ENCODE measurements at regions of chr7 and their contacts with region 1.

Region 1: GRCh38 chr7:92245487-92246362 is at the starts of genes ANKIB1 and KRIT1:
- DNase-seq: peak; percentile 81
- H3K4me3 Mint-ChIP-seq: peak within 1 kb of the TSS; percentile 94
- H3K27ac Mint-ChIP-seq: peak within 1 kb of the TSS; percentile 99
- H3K4me1 Mint-ChIP-seq: peaks cover 34% of the 10 kb centered on the region
- H3K27me3 Mint-ChIP-seq: no peaks in the 10 kb centered on the region
- total RNA-seq, gene ANKIB1: 60.9 and 61.8 TPM in 2 replicates
- total RNA-seq, gene KRIT1: 48.2 and 48.3 TPM in 2 replicates

Region 2: DNA sequence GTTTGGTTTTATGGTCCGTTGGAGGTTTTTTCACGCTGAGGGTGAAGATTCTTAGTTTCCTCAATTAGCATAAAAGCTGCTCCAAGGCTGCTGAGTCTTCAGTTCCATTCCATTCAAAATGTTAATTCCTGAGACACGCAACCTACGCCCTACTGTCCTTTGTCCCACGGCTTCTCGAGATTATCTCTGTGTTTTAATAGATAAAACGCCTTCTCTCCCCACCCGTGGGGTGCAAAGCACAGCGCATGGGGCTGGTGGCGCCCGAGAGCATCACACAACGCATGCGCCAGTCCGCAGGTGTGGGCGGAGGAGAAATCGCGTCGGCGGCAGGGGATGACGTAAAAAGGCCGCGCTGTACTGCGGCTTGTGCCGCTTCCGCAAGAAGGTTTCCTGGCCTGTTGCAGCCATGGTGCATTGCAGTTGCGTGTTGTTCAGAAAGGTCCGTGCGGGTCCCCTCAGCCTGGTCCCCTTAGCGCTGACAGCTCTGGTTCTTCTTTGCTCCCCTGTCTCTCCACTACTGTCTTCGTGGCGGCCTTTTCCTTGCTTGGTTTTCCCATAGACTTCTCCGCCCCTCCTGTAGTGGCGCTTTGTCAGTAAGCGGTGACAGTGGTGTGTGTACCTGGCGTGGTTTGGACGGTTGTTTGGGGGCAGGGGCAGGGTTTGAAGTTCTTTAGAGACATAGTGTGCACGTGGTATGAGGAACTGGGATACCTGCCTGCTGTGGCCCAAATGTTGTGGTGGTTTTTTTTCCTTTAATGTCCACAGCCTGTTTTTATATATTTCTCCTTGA is 1899.2 kb before region 1 on chr7 and contains the start of gene GTPBP10:
- intact Hi-C with region 1: loop called (anchors 5 kb)
- DNase-seq: peak; percentile 94
- H3K4me3 Mint-ChIP-seq: peak within 1 kb of the TSS; percentile 91
- H3K27ac Mint-ChIP-seq: peak within 1 kb of the TSS; percentile 97
- H3K4me1 Mint-ChIP-seq: peaks cover 38% of the 10 kb centered on the region
- H3K27me3 Mint-ChIP-seq: no peaks in the 10 kb centered on the region
- total RNA-seq, gene GTPBP10: 32.6 and 36.2 TPM in 2 replicates

Region 3: GRCh38 chr7:92042056-92042737 is 203.5 kb before region 1 on chr7:
- intact Hi-C with region 1: no loop called
- DNase-seq: no peak
- H3K4me3 Mint-ChIP-seq: no peak overlapping the region
- H3K27ac Mint-ChIP-seq: no peak overlapping the region
- H3K4me1 Mint-ChIP-seq: no peaks in the 10 kb centered on the region
- H3K27me3 Mint-ChIP-seq: no peaks in the 10 kb centered on the region

Region 4: DNA sequence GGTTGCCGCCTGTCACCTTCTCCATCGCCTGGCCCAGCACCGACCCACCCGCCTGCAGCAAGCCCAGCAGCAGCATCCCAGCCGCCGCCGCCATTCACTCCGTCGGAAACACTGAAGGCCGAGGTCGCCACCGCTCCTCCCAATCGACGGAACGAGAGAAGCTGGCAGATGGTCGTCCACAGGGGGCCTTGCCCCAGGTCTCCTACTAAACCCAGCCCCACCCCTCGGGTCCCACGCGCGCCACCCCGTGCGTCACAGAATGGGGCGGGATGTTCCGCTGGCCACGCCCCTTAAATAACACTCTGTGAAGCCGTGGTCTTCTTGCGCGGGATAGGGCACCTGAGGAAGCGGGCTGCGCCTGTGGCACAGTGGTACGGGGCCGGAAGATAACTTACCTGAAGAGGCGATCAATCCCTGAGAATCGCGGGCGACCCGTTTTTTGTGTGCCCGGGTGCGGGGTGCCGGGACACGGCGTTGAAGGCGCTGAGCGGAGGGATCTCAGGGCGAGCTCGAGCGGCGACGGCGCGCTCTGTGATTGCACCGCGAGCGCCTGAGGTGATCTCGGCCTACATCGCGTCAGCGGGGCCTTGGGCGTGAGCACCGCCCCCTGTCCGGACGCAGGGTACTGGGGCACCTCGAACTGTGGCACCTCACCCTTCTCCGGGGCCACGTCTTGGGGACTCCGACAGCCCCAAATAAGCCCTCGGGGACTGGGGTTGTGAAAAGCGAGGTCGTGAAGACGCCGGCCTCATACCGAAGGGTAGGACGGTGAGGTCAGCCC is 111.3 kb before region 1 on chr7 and contains the start of gene CYP51A1:
- intact Hi-C with region 1: loop called (anchors 1 kb)
- DNase-seq: peak; percentile 92
- H3K4me3 Mint-ChIP-seq: peak within 1 kb of the TSS; percentile 98
- H3K27ac Mint-ChIP-seq: peak within 1 kb of the TSS; percentile 97
- H3K4me1 Mint-ChIP-seq: peaks cover 44% of the 10 kb centered on the region
- H3K27me3 Mint-ChIP-seq: no peaks in the 10 kb centered on the region
- total RNA-seq, gene CYP51A1: 96.9 and 102 TPM in 2 replicates

Region 5: GRCh38 chr7:92313055-92313454 is 67.3 kb after region 1 on chr7:
- intact Hi-C with region 1: loop called (anchors 5 kb)
- DNase-seq: no peak
- H3K4me3 Mint-ChIP-seq: no peak overlapping the region
- H3K27ac Mint-ChIP-seq: no peak overlapping the region
- H3K4me1 Mint-ChIP-seq: no peaks in the 10 kb centered on the region
- H3K27me3 Mint-ChIP-seq: no peaks in the 10 kb centered on the region

Region 6: GRCh38 chr7:92336662-92337340 is 91.1 kb after region 1 on chr7:
- intact Hi-C with region 1: no loop called
- DNase-seq: no peak
- H3K4me3 Mint-ChIP-seq: no peak overlapping the region
- H3K27ac Mint-ChIP-seq: no peak overlapping the region
- H3K4me1 Mint-ChIP-seq: no peaks in the 10 kb centered on the region
- H3K27me3 Mint-ChIP-seq: no peaks in the 10 kb centered on the region

Region 7: DNA sequence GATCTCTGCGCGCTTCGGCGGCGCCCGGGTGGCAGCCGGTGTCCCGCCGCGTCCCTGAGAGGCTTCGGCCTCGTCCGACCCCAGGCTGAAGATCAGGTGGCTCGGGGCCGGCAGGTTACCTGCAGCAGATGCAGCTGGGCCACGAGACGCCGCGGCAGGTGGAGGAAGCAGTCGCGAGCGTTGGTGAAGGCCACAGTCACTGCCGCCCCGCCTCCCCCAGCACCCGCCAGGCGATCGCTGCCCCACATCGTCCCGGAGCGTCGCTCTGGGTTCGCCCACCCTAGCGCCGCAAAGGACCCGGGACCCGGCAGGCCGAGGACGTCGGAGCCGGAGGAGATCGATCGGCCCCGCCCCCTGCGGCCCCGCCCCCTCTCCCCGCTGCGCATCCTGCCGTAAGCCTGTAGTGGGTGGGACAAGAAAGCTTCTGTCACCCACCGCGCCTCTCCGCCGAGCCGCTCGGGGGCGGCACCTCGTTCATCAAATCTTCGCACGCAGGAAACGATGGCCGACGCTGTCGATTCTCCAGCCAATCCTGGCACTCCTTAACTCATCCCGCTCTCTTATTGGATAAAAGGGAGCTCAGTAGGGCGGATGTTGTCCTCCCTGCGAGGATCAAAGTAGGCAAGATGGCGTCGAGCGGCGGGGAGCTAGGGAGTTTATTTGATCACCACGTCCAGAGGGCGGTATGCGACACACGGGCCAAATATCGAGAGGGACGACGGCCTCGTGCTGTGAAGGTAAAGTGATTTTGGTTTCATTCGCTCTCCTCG is 282.6 kb after region 1 on chr7 and contains the starts of genes PEX1 and RBM48:
- intact Hi-C with region 1: loop called (anchors 1 kb)
- DNase-seq: peak; percentile 94
- H3K4me3 Mint-ChIP-seq: peak within 1 kb of the TSS; percentile 91
- H3K27ac Mint-ChIP-seq: peak within 1 kb of the TSS; percentile 94
- H3K4me1 Mint-ChIP-seq: peaks cover 24% of the 10 kb centered on the region
- H3K27me3 Mint-ChIP-seq: no peaks in the 10 kb centered on the region
- total RNA-seq, gene PEX1: 14.7 and 17.0 TPM in 2 replicates
- total RNA-seq, gene RBM48: 17.2 and 17.6 TPM in 2 replicates

Region 8: DNA sequence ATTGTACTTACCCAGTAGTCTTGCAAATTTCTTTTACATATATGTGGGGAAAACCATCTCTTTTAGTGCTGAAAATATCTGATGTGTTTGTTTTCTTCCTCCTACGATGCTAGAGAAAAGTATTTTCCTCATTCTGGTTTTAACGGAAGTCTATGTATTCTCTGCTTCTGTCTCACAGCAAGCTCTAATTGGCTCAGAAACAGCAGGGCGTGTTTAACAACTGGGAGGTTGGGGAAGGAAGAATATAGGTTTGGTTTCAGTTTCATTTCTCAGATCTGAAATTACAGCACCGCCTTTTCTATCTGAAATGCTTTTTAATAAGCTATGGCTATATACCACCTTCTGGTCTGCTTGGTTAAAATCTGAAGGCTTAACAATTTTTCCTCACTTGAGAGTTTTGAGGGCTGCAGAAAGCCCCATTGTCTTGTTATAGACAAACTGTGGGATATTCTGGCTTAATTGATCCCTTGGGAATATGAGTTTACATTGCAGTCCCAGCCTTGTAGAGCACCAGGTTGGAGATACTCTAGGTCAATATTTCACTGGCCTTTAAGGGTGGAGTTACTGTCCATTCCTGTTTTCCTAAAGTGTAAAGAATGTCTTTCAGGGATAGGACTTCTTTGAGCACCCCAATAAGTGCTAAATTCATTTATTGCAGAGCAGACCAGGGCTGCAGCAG is 872.3 kb after region 1 on chr7 and contains the start of gene SAMD9:
- intact Hi-C with region 1: loop called (anchors 5 kb)
- DNase-seq: peak; percentile 63
- H3K4me3 Mint-ChIP-seq: peak within 1 kb of the TSS; percentile 91
- H3K27ac Mint-ChIP-seq: peak within 1 kb of the TSS; percentile 82
- H3K4me1 Mint-ChIP-seq: peaks cover 60% of the 10 kb centered on the region
- H3K27me3 Mint-ChIP-seq: no peaks in the 10 kb centered on the region
- total RNA-seq, gene SAMD9: 11.5 and 11.8 TPM in 2 replicates